Activated CD4-positive, alpha-beta memory T cell treated with anti-CD3 and anti-CD28 coated beads for 36 hours (primary cell): ENCODE measurements at regions of chr2 and their contacts with region 1.

Region 1: GRCh38 chr2:131521961-131522794 is 5.5 kb upstream of the CCDC74A start:
- DNase-seq: no peak
- H3K4me3 Mint-ChIP-seq: no peak overlapping the region
- H3K27ac Mint-ChIP-seq: no peak overlapping the region
- H3K4me1 Mint-ChIP-seq: peaks cover 2% of the 10 kb centered on the region
- H3K27me3 Mint-ChIP-seq: no peaks in the 10 kb centered on the region

Region 2: DNA sequence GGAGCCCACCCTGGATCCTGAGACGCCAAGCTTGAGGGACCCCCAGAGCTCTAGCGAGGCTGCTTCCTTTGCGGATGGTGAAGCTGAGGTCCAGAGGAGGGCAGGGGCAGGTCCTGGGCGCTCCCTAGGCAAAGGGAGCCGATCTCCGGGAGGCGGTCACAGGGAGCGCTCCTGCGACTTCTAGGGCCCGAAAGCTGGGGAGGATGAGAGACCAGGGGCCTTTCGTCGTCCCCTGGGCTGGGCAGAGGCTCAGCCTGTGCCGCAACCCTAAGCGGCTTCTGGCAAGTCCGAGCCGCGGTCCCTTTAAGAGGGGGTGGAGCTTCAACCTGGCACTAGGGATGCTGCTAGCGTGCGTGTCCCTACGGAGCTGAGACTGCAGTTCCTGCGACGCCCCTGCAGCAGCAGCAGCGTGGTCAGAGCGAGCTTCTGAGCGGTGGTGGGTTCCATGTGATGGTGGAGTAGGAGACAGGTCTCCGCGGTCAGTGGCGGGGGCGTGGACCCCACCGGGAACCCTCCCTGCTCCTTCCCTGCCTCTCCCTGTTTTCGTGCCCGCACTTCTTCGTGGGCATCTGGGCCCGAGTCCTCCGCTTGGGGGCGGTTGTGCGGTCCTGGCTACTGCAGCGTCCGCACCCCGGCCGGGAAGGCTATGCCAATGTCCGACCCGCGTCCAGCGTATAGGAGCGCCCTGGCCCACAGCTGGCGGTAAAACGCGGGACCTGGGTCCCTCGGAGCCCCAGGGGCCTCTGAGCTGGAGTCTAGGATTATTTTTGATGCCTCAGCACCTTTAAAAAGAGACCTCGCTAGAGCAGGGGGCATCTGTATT is 160.2 kb after region 1 on chr2:
- CTCF ChIA-PET with region 1: no interaction called
- POLR2A ChIA-PET with region 1: no interaction called
- intact Hi-C with region 1: loop called (anchors 2 kb)
- DNase-seq: peak; percentile 84
- H3K4me3 Mint-ChIP-seq: peak overlapping the region; percentile 79
- H3K27ac Mint-ChIP-seq: peak overlapping the region; percentile 56
- H3K4me1 Mint-ChIP-seq: peaks cover 33% of the 10 kb centered on the region
- H3K27me3 Mint-ChIP-seq: peaks cover 3% of the 10 kb centered on the region